HepG2 (cell line): ENCODE measurements at regions of chr6 and their contacts with region 1.

Region 1: GRCh38 chr6:63352587-63353285 is 33.0 kb upstream of the LGSN start:
- DNase-seq: peak; percentile 80
- ATAC-seq: peak; percentile 97
- H3K4me3 ChIP-seq: no peak overlapping the region
- H3K27ac ChIP-seq: peak overlapping the region; percentile 49
- H3K4me1 ChIP-seq: peaks cover 49% of the 10 kb centered on the region
- H3K27me3 ChIP-seq: no peaks in the 10 kb centered on the region
- CTCF ChIP-seq: peak; percentile 97
- EP300 ChIP-seq: peak in 1 of 2 experiments; percentile 66; a peak in 2 of 4 replicates
- POLR2A ChIP-seq: no peak
- RAD21 ChIP-seq: peak; percentile 99

Region 2: DNA sequence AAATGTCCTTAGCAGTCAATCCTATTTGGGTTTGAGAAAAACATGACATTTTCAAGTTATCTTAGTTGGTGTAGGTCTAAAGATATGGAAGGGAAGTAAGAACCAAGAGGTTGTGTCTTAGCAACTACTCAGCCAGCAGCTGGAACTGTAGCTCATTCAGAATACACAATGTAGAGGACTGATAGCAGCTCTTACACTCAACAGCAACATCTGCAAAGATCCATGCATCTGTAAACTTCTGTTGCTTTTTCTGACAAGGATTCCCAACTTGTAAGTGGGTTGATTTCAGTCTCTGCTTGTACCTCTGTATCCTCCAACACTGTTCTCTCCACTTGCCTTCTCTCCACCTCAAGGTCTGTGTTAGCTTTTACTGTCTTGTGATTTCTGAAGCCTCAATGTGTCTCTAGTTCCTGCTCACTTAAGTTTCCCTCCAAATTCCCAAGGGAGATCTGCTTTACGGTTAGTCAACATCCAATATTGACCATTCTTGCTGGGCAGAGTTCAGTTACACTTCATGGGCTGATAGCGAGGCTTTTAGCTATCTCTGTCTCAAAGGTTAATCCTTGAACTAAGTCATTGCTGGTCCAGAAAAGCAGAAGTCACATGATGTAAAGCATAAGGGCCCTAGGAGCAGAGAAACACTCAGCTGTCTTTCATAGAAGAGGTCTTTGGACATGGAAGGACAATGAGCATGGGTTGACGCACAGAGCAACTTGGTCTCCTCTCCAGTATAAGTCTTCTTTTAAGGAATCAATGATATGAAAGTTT is 38.7 kb after region 1 on chr6:
- CTCF ChIA-PET with region 1: no interaction called
- POLR2A ChIA-PET with region 1: interaction called, 5 read pairs
- in situ Hi-C with region 1: no loop called
- intact Hi-C with region 1: loop called (anchors 1 kb)
- DNase-seq: peak; percentile 99
- ATAC-seq: peak; percentile 95
- H3K4me3 ChIP-seq: no peak overlapping the region
- H3K27ac ChIP-seq: peak overlapping the region; percentile 83
- H3K4me1 ChIP-seq: peaks cover 56% of the 10 kb centered on the region
- H3K27me3 ChIP-seq: no peaks in the 10 kb centered on the region
- CTCF ChIP-seq: no peak
- EP300 ChIP-seq: peak; percentile 34 to 99; a peak in 2 of 4 replicates
- POLR2A ChIP-seq: 0 out of 4 replicates have a peak, but pooled peaks of 1 of the 2 experiments have one; percentile 18
- RAD21 ChIP-seq: peak; percentile 63

Region 3: GRCh38 chr6:63458480-63459115 is 105.9 kb after region 1 on chr6:
- CTCF ChIA-PET with region 1: no interaction called
- POLR2A ChIA-PET with region 1: interaction called, 7 read pairs
- in situ Hi-C with region 1: no loop called
- intact Hi-C with region 1: loop called (anchors 1 kb)
- DNase-seq: peak; percentile 99
- ATAC-seq: peak; percentile 99
- H3K4me3 ChIP-seq: peak overlapping the region in 2 of 3 experiments; percentile 13 to 14; a peak in 2 of 6 replicates
- H3K27ac ChIP-seq: peak overlapping the region; percentile 96
- H3K4me1 ChIP-seq: peaks cover 89% of the 10 kb centered on the region
- H3K27me3 ChIP-seq: no peaks in the 10 kb centered on the region
- CTCF ChIP-seq: no peak
- EP300 ChIP-seq: peak; percentile 99 to 100
- POLR2A ChIP-seq: peak; percentile 53 to 81; a peak in 3 of 4 replicates
- RAD21 ChIP-seq: no peak

Region 4: DNA sequence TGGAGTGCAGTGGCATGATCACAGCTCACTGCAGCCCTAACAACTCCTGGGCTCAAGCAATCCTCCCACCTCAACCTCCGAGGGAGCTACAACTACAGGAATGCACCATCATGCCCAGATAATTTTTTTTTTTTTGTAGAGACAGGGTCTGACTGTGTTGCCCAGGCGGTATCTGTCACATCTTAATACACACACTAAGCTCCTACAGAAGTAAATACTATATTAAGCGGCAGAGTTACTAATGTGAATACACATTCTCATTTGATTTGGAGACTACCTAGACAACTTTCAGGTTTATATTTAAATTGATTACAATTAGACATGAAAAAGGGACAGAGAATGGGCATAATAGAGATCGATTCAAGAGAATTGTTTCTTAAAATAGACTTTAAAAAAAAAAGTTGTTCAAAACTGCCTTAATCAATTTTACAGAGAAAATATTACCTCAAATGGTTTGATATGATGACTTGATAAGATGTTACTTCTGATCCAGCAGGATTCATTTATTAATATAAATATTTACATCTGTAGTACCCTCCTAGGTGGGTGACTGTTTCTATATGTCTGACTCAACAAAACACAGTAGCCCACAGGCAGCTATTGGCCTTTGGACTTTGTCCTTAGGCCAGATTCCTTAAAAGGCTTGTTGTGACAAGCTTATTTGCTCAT is 212.5 kb after region 1 on chr6:
- CTCF ChIA-PET with region 1: no interaction called
- POLR2A ChIA-PET with region 1: interaction called, 5 read pairs
- in situ Hi-C with region 1: loop called (anchors 5 kb)
- intact Hi-C with region 1: loop called (anchors 2 kb)
- DNase-seq: peak; percentile 98
- ATAC-seq: peak; percentile 83
- H3K4me3 ChIP-seq: peak overlapping the region; percentile 24 to 63 (median 42)
- H3K27ac ChIP-seq: peak overlapping the region; percentile 83
- H3K4me1 ChIP-seq: peaks cover 98% of the 10 kb centered on the region
- H3K27me3 ChIP-seq: no peaks in the 10 kb centered on the region
- CTCF ChIP-seq: no peak
- EP300 ChIP-seq: peak; percentile 76 to 95
- POLR2A ChIP-seq: peak in 1 of 2 experiments; percentile 43; a peak in 1 of 4 replicates
- RAD21 ChIP-seq: no peak

Region 5: GRCh38 chr6:63685446-63686379 is 333.0 kb after region 1 on chr6:
- CTCF ChIA-PET with region 1: no interaction called
- POLR2A ChIA-PET with region 1: no interaction called
- in situ Hi-C with region 1: no loop called
- intact Hi-C with region 1: loop called (anchors 10 kb)
- DNase-seq: no peak
- ATAC-seq: no peak
- H3K4me3 ChIP-seq: no peak overlapping the region
- H3K27ac ChIP-seq: no peak overlapping the region
- H3K4me1 ChIP-seq: no peaks in the 10 kb centered on the region
- H3K27me3 ChIP-seq: no peaks in the 10 kb centered on the region
- CTCF ChIP-seq: no peak
- EP300 ChIP-seq: no peak
- POLR2A ChIP-seq: no peak
- RAD21 ChIP-seq: no peak

Region 6: DNA sequence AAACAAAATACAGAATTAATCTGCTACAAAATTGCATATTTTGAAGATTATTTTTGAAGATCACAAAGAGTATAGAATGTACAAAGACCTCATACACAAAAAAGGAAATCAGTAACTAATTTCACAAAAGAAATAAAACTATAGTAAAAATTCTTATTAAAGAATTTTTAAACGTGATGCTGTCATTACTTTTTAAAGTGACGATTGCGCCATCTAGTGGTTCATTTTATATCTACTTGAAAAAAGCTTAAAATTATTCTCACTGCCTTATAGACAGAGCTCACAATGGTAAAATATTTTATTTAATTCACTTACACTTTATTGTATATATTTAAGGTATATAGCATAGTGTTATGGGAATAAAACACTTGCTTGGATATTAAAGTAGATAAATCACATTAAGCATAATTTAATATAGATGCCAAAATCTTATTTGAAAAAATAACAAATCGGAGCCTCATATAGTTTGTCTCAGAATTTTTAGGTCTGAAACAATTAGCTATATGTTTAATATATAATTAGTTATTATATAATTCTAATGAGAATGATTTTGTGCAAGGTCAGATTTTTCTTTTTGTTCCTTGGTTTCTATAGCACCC is 411.7 kb after region 1 on chr6:
- CTCF ChIA-PET with region 1: interaction called, 7 read pairs
- POLR2A ChIA-PET with region 1: interaction called, 4 read pairs
- in situ Hi-C with region 1: loop called (anchors 5 kb)
- intact Hi-C with region 1: loop called (anchors 1 kb)
- DNase-seq: peak; percentile 65
- ATAC-seq: no peak
- H3K4me3 ChIP-seq: no peak overlapping the region
- H3K27ac ChIP-seq: no peak overlapping the region
- H3K4me1 ChIP-seq: no peaks in the 10 kb centered on the region
- H3K27me3 ChIP-seq: no peaks in the 10 kb centered on the region
- CTCF ChIP-seq: peak; percentile 46; the same call in 1 of the 2 replicates
- EP300 ChIP-seq: no peak
- POLR2A ChIP-seq: no peak
- RAD21 ChIP-seq: no peak

Region 7: GRCh38 chr6:63802606-63803206 is 450.0 kb after region 1 on chr6:
- CTCF ChIA-PET with region 1: interaction called, 13 read pairs
- POLR2A ChIA-PET with region 1: interaction called, 3 read pairs
- in situ Hi-C with region 1: loop called (anchors 10 kb)
- intact Hi-C with region 1: loop called (anchors 1 kb)
- DNase-seq: peak; percentile 31
- ATAC-seq: no peak
- H3K4me3 ChIP-seq: no peak overlapping the region
- H3K27ac ChIP-seq: no peak overlapping the region
- H3K4me1 ChIP-seq: peaks cover 49% of the 10 kb centered on the region
- H3K27me3 ChIP-seq: no peaks in the 10 kb centered on the region
- CTCF ChIP-seq: peak; percentile 66
- EP300 ChIP-seq: no peak
- POLR2A ChIP-seq: no peak
- RAD21 ChIP-seq: peak; percentile 54; the same call in 1 of the 2 replicates